ENCODE measurements at regions of chrX and their contacts with region 1.

Region 1: DNA sequence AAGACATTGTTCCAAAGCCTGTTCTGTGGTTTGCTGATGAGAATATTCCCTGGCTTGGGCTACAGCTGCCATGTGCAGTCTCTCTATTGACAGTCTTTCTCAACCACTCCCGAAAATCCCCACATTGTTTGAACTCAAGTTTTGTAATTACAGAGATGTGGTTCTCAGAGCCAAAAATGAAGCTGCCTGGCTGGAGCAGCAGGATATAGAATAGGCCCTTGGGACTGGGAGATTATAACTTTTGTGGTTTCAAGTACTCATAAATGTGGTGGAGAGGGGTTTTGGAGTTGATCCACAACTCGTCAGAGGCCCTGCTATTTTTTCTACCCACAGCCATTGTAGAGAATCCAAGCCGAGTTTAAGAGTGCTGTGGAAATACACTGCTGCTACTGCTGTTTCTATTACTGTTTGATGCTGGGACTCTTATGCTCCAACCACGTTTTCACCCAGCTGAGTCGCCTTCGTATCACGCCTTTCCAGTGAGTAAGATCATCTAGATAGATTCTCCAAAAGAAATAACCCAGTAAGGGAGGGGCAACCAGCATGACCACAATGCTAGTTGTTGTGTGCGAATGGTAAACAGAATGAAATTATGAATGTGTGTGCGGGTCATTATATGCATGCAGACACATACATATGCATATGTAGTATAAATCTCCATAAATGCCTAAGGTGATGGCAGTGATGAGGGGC is 57.1 kb upstream of the ATXN3L start:
- DNase-seq: no peak
- H3K4me3 Mint-ChIP-seq: no peak overlapping the region
- H3K27ac Mint-ChIP-seq: no peak overlapping the region
- H3K4me1 Mint-ChIP-seq: peaks cover 26% of the 10 kb centered on the region
- H3K27me3 Mint-ChIP-seq: no peaks in the 10 kb centered on the region

Region 2: DNA sequence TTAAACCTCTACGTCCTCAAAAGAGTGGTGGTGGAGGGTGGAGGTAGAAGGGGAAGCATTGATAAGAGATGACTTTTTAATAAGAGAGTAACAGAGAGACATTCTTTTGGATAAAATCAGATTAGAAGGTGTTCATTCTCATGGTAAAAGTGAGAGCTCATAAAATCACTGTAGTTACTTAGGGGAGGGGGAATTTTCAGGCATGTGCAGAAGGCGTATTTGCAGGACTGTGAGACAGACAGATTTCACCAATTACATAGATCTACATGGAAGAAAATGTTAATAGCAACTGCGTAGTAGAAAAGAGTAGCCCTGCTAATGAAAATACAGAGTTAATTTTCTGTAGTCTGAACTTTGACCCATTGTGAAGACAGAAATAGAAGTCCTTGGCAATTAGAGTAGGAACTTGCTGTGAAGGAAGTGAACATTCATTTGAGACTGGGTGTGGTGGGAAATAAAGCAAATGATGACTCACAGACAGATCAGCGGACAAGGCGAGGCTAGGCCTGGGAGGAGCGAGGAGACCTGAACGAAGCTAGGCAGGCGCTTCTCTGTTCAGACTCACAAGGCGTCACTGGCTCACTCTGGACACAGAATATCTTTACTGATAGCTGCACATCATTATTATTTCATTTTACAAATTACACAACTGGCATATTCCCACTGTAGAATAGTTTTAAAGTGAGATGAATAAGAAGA is 275.4 kb before region 1 on chrX:
- intact Hi-C with region 1: no loop called
- DNase-seq: peak; percentile 82
- H3K4me3 Mint-ChIP-seq: peak overlapping the region; percentile 13
- H3K27ac Mint-ChIP-seq: peak overlapping the region; percentile 82
- H3K4me1 Mint-ChIP-seq: peaks cover 44% of the 10 kb centered on the region
- H3K27me3 Mint-ChIP-seq: no peaks in the 10 kb centered on the region

Region 3: GRCh38 chrX:13257223-13258051 is 119.6 kb before region 1 on chrX:
- intact Hi-C with region 1: loop called (anchors 5 kb)
- DNase-seq: peak; percentile 60
- H3K4me3 Mint-ChIP-seq: peak overlapping the region; percentile 40
- H3K27ac Mint-ChIP-seq: peak overlapping the region; percentile 53
- H3K4me1 Mint-ChIP-seq: peaks cover 39% of the 10 kb centered on the region
- H3K27me3 Mint-ChIP-seq: no peaks in the 10 kb centered on the region

Region 4: GRCh38 chrX:13305108-13305507 is 71.9 kb before region 1 on chrX:
- intact Hi-C with region 1: no loop called
- DNase-seq: no peak
- H3K4me3 Mint-ChIP-seq: no peak overlapping the region
- H3K27ac Mint-ChIP-seq: no peak overlapping the region
- H3K4me1 Mint-ChIP-seq: peaks cover 15% of the 10 kb centered on the region
- H3K27me3 Mint-ChIP-seq: no peaks in the 10 kb centered on the region

Region 5: DNA sequence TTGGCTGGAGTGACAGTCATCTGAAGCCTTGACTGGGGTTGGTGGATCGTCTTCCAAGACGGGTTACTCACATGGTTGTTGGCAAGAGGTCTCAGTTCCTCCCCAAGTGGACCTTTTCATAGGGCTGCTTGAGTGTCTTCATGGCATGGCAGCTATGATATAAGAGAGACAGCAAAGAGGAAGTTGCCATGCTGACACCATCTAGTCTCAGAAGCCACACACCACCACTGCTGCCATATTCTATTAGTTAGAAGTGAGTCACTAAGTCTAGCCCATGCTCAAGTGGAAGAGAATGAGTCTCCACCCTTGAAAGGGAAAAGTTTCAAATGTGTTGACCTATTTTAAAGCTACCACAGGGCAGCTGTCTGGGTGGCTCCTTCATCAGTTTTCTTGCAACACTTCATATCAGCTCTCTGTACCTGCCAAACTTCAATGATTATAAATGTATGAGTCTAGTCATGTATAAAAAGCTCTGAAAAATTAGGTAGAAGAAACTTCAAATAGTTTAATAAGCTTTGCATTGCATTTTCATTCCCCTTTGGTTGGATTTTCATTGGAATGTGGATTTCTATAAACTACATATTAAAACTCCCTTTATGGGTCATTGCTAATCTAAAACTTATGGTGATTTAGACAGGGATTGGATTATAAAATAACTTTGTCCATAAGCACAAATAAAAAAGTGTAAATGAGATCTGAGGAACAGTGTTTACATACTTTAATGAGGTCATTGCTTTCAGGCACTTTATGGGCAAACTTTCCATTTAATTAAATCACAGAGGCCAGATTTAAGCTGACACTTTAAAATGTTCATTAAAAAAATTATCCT is 10.9 kb after region 1 on chrX:
- intact Hi-C with region 1: no loop called
- DNase-seq: no peak
- H3K4me3 Mint-ChIP-seq: no peak overlapping the region
- H3K27ac Mint-ChIP-seq: no peak overlapping the region
- H3K4me1 Mint-ChIP-seq: peaks cover 3% of the 10 kb centered on the region
- H3K27me3 Mint-ChIP-seq: no peaks in the 10 kb centered on the region

Region 6: GRCh38 chrX:13398073-13398823 is 21.2 kb after region 1 on chrX:
- intact Hi-C with region 1: loop called (anchors 2 kb)
- DNase-seq: peak; percentile 56
- H3K4me3 Mint-ChIP-seq: no peak overlapping the region
- H3K27ac Mint-ChIP-seq: no peak overlapping the region
- H3K4me1 Mint-ChIP-seq: peaks cover 13% of the 10 kb centered on the region
- H3K27me3 Mint-ChIP-seq: no peaks in the 10 kb centered on the region

Measured in activated CD4-positive, alpha-beta T cell treated with anti-CD3 and anti-CD28 coated beads, Interleukin-2, amount 10 ng/mL, durations not matched to agents 24 days and 14 days (primary cell).